HepG2 (cell line): ENCODE measurements at regions of chr5 and their contacts with region 1.

Region 1: GRCh38 chr5:90783460-90784333 is 225.1 kb downstream of the ADGRV1 start:
- DNase-seq: peak; percentile 44
- ATAC-seq: peak; percentile 88
- H3K4me3 ChIP-seq: no peak overlapping the region
- H3K27ac ChIP-seq: no peak overlapping the region
- H3K4me1 ChIP-seq: no peaks in the 10 kb centered on the region
- H3K27me3 ChIP-seq: no peaks in the 10 kb centered on the region
- CTCF ChIP-seq: peak; percentile 77
- EP300 ChIP-seq: no peak
- POLR2A ChIP-seq: no peak
- RAD21 ChIP-seq: 0 out of 2 replicates have a peak, but pooled peaks have one; percentile 23

Region 2: DNA sequence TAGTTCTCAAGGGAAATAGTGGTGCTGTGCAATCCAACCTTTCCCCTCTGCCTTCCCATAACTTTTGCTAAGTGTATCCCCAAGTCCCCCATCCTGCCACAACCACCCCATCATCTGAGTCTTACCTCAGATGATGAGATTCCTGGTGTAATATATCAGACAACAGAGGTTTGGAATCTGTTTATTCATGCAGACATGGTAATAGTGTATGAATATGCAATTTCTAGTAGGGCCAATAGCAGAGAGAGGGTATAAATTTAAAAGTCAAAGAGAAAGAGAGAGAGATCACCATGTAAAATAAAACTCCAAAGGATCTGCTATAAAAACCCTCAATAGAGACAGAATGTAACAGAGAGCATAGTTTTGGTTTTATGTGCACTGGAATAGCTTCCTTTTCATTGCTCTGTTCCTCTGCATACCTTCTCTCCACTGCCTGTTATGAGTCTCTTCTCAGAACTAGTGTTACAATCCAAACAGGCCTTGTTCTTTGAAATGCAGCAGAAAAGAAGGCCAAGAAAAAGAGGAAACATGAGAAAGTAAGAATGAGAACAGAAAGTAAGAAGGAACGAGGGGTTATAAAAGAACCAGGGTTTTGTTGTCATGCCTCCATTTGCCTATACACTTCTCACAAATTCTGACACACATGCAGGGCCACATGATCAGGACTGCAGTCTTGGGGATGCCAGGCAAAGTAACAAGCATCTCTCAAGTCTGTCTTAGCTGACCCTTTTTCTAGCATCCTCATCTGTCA is 652.1 kb before region 1 on chr5:
- CTCF ChIA-PET with region 1: no interaction called
- POLR2A ChIA-PET with region 1: no interaction called
- in situ Hi-C with region 1: no loop called
- intact Hi-C with region 1: loop called (anchors 2 kb)
- DNase-seq: no peak
- ATAC-seq: no peak
- H3K4me3 ChIP-seq: no peak overlapping the region
- H3K27ac ChIP-seq: no peak overlapping the region
- H3K4me1 ChIP-seq: no peaks in the 10 kb centered on the region
- H3K27me3 ChIP-seq: no peaks in the 10 kb centered on the region; a peak in 1 of 5 replicates
- CTCF ChIP-seq: no peak
- EP300 ChIP-seq: no peak
- POLR2A ChIP-seq: no peak
- RAD21 ChIP-seq: no peak

Region 3: GRCh38 chr5:90293931-90294330 is 489.8 kb before region 1 on chr5:
- CTCF ChIA-PET with region 1: no interaction called
- POLR2A ChIA-PET with region 1: no interaction called
- in situ Hi-C with region 1: no loop called
- intact Hi-C with region 1: loop called (anchors 10 kb)
- DNase-seq: peak; percentile 25
- ATAC-seq: no peak
- H3K4me3 ChIP-seq: no peak overlapping the region
- H3K27ac ChIP-seq: no peak overlapping the region
- H3K4me1 ChIP-seq: no peaks in the 10 kb centered on the region
- H3K27me3 ChIP-seq: no peaks in the 10 kb centered on the region
- CTCF ChIP-seq: no peak
- EP300 ChIP-seq: no peak
- POLR2A ChIP-seq: no peak
- RAD21 ChIP-seq: no peak

Region 4: GRCh38 chr5:90446961-90447360 is 336.7 kb before region 1 on chr5:
- CTCF ChIA-PET with region 1: no interaction called
- POLR2A ChIA-PET with region 1: no interaction called
- in situ Hi-C with region 1: loop called (anchors 10 kb)
- intact Hi-C with region 1: no loop called
- DNase-seq: no peak
- ATAC-seq: no peak
- H3K4me3 ChIP-seq: no peak overlapping the region
- H3K27ac ChIP-seq: no peak overlapping the region
- H3K4me1 ChIP-seq: no peaks in the 10 kb centered on the region
- H3K27me3 ChIP-seq: no peaks in the 10 kb centered on the region
- CTCF ChIP-seq: no peak
- EP300 ChIP-seq: no peak
- POLR2A ChIP-seq: no peak
- RAD21 ChIP-seq: no peak

Region 5: GRCh38 chr5:90709323-90710155 is 74.2 kb before region 1 on chr5:
- CTCF ChIA-PET with region 1: interaction called, 17 read pairs
- POLR2A ChIA-PET with region 1: no interaction called
- in situ Hi-C with region 1: loop called (anchors 10 kb)
- intact Hi-C with region 1: loop called (anchors 1 kb)
- DNase-seq: peak; percentile 27
- ATAC-seq: peak; percentile 89
- H3K4me3 ChIP-seq: no peak overlapping the region
- H3K27ac ChIP-seq: no peak overlapping the region
- H3K4me1 ChIP-seq: no peaks in the 10 kb centered on the region
- H3K27me3 ChIP-seq: no peaks in the 10 kb centered on the region
- CTCF ChIP-seq: peak; percentile 67
- EP300 ChIP-seq: no peak
- POLR2A ChIP-seq: no peak
- RAD21 ChIP-seq: no peak

Region 6: DNA sequence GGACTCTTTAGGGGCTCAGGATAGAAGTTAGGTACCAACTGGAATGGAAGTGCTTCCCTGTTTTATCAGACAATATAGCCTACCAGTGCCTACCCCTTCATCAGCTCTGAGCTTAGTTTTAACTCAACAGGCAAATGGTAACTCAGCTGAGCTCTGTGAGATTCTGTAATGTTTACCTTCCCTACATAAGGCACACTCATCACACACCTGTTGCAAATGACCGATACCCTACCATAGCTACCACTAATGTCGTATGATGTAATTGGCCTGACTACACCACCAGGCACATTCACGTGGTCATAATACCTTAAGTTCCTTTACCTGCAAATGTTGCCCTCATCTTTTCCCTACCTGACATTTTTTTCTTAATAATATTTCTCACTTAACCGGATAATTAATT is 29.7 kb after region 1 on chr5:
- CTCF ChIA-PET with region 1: no interaction called
- POLR2A ChIA-PET with region 1: no interaction called
- in situ Hi-C with region 1: no loop called
- intact Hi-C with region 1: no loop called
- DNase-seq: no peak
- ATAC-seq: no peak
- H3K4me3 ChIP-seq: no peak overlapping the region
- H3K27ac ChIP-seq: no peak overlapping the region
- H3K4me1 ChIP-seq: no peaks in the 10 kb centered on the region
- H3K27me3 ChIP-seq: peaks cover 0 to 1% of the 10 kb centered on the region in 2 experiments; a peak in 1 of 5 replicates
- CTCF ChIP-seq: no peak
- EP300 ChIP-seq: no peak
- POLR2A ChIP-seq: no peak
- RAD21 ChIP-seq: no peak